B cell (primary cell): ENCODE measurements at regions of chr10 and their contacts with region 1.

Region 1: GRCh38 chr10:117216611-117217195 is 19.4 kb downstream of the KCNK18 start:
- DNase-seq: peak; percentile 77
- ATAC-seq: peak; percentile 88
- H3K4me3 ChIP-seq: peak overlapping the region; percentile 19 to 62 (median 46)
- H3K4me3 Mint-ChIP-seq: peak overlapping the region; percentile 80
- H3K27ac ChIP-seq: no peak overlapping the region
- H3K27ac Mint-ChIP-seq: no peak overlapping the region
- H3K4me1 ChIP-seq: peaks cover 14 to 15% of the 10 kb centered on the region in 2 donors
- H3K4me1 Mint-ChIP-seq: peaks cover 14% of the 10 kb centered on the region
- H3K27me3 ChIP-seq: peaks cover 0 to 25% (median 9%) of the 10 kb centered on the region in 4 experiments
- H3K27me3 Mint-ChIP-seq: peaks cover 34% of the 10 kb centered on the region
- CTCF ChIP-seq: peak; percentile 100

Region 2: GRCh38 chr10:117204316-117204715 is 12.4 kb before region 1 on chr10:
- CTCF ChIA-PET with region 1: interaction called, 16 read pairs
- POLR2A ChIA-PET with region 1: no interaction called
- intact Hi-C with region 1: no loop called
- DNase-seq: no peak
- ATAC-seq: no peak
- H3K4me3 ChIP-seq: no peak overlapping the region
- H3K4me3 Mint-ChIP-seq: no peak overlapping the region
- H3K27ac ChIP-seq: no peak overlapping the region
- H3K27ac Mint-ChIP-seq: no peak overlapping the region
- H3K4me1 ChIP-seq: no peaks in the 10 kb centered on the region
- H3K4me1 Mint-ChIP-seq: no peaks in the 10 kb centered on the region
- H3K27me3 ChIP-seq: no peaks in the 10 kb centered on the region
- H3K27me3 Mint-ChIP-seq: peaks cover 15% of the 10 kb centered on the region
- CTCF ChIP-seq: no peak

Region 3: GRCh38 chr10:117226824-117227451 is 10.2 kb after region 1 on chr10:
- CTCF ChIA-PET with region 1: interaction called, 22 read pairs
- POLR2A ChIA-PET with region 1: no interaction called
- intact Hi-C with region 1: no loop called
- DNase-seq: no peak
- ATAC-seq: no peak
- H3K4me3 ChIP-seq: no peak overlapping the region
- H3K4me3 Mint-ChIP-seq: no peak overlapping the region
- H3K27ac ChIP-seq: no peak overlapping the region
- H3K27ac Mint-ChIP-seq: no peak overlapping the region
- H3K4me1 ChIP-seq: no peaks in the 10 kb centered on the region
- H3K4me1 Mint-ChIP-seq: no peaks in the 10 kb centered on the region
- H3K27me3 ChIP-seq: peaks cover 0 to 8% (median 1%) of the 10 kb centered on the region in 4 experiments
- H3K27me3 Mint-ChIP-seq: peaks cover 41% of the 10 kb centered on the region
- CTCF ChIP-seq: no peak

Region 4: DNA sequence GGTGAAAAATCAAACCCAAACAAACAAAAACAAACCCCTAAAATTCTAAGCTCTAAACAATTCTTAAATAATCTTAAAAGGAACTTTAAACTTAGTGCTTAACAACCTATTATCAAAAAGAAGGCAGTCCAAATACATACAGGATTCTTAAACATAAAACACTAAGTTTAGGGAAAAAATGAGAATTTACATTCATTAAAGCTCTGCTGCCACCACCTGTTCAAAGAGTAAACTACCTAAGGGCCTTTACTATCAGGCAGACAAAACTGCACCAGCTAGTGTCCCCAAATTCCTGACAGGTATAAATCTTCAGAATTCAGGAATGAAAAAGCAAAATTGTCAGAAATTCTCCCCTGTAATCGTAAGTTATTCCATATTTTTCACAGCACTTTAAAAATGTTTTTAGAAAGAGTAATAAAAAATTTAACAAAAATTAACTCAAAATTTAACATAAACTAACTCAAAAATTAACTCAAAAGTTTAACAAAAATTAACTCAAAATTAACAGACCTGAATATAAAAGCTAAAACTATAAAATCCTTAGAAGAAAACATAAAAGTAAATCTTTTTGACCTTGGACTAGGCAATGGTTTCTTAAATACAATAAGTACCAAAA is 103.5 kb after region 1 on chr10:
- CTCF ChIA-PET with region 1: interaction called, 69 read pairs
- POLR2A ChIA-PET with region 1: no interaction called
- intact Hi-C with region 1: loop called (anchors 1 kb)
- DNase-seq: peak; percentile 21
- ATAC-seq: no peak
- H3K4me3 ChIP-seq: no peak overlapping the region
- H3K4me3 Mint-ChIP-seq: no peak overlapping the region
- H3K27ac ChIP-seq: no peak overlapping the region
- H3K27ac Mint-ChIP-seq: no peak overlapping the region
- H3K4me1 ChIP-seq: no peaks in the 10 kb centered on the region
- H3K4me1 Mint-ChIP-seq: no peaks in the 10 kb centered on the region
- H3K27me3 ChIP-seq: no peaks in the 10 kb centered on the region
- H3K27me3 Mint-ChIP-seq: no peaks in the 10 kb centered on the region
- CTCF ChIP-seq: peak; percentile 69

Region 5: DNA sequence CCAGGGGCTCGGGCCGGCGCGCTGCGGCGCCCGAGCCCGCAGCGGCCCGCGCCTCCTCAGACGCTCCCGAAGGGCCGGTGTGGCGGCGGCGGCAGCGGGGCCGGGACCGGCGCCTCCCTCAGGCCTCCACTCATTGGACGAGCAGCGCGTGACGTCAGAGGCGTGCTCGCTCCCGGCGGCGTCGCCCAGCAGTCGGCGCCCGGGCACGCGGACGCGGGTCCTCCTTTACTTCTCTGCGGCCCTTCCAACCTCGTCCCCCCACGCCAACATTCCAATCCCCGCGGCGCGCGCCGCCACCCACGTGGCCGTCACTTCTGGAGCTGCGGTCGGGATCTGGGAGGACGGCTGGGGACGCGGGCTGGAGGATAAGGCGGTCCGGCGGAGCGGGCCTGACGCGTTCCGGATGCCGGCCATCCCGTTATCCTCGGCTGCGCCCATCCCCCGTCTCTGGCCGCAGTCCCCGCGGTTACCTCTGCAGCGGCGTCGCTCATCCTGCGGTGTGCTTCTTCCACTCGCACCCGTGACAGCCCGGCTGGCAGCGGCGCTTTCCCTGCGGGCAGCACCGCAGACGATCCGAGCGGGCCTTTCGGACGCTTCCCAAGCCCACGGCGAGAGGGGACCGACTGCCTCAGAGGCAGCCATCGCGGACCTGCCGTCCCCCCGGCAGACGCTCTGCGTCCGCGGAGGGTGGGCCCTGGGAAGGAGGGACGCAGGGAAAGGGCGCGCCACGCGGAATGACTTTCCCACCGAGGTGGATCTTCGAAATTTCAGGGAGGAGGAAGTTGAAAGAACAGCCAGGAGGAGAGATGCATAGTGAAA is 158.9 kb after region 1 on chr10 and contains the start of gene PDZD8:
- CTCF ChIA-PET with region 1: no interaction called
- POLR2A ChIA-PET with region 1: no interaction called
- intact Hi-C with region 1: loop called (anchors 5 kb)
- DNase-seq: peak; percentile 93
- ATAC-seq: peak; percentile 89
- H3K4me3 ChIP-seq: peak within 1 kb of the TSS; percentile 76 to 99 (median 90)
- H3K4me3 Mint-ChIP-seq: peak within 1 kb of the TSS; percentile 97
- H3K27ac ChIP-seq: peak within 1 kb of the TSS; percentile 70 to 80
- H3K27ac Mint-ChIP-seq: peak within 1 kb of the TSS; percentile 91
- H3K4me1 ChIP-seq: peaks cover 17 to 24% of the 10 kb centered on the region in 2 donors
- H3K4me1 Mint-ChIP-seq: peaks cover 31% of the 10 kb centered on the region
- H3K27me3 ChIP-seq: peaks cover 0 to 23% (median 4%) of the 10 kb centered on the region in 4 experiments
- H3K27me3 Mint-ChIP-seq: peaks cover 25% of the 10 kb centered on the region
- CTCF ChIP-seq: no peak
- total RNA-seq, gene PDZD8: 11.3 and 13.2 TPM in 2 replicates

Region 6: GRCh38 chr10:118241229-118242137 is 1024.8 kb after region 1 on chr10:
- CTCF ChIA-PET with region 1: interaction called, 41 read pairs
- POLR2A ChIA-PET with region 1: no interaction called
- intact Hi-C with region 1: no loop called
- DNase-seq: peak; percentile 67
- ATAC-seq: no peak
- H3K4me3 ChIP-seq: no peak overlapping the region
- H3K4me3 Mint-ChIP-seq: no peak overlapping the region
- H3K27ac ChIP-seq: no peak overlapping the region
- H3K27ac Mint-ChIP-seq: no peak overlapping the region
- H3K4me1 ChIP-seq: no peaks in the 10 kb centered on the region
- H3K4me1 Mint-ChIP-seq: no peaks in the 10 kb centered on the region
- H3K27me3 ChIP-seq: peaks cover 0 to 25% (median 12%) of the 10 kb centered on the region in 4 experiments
- H3K27me3 Mint-ChIP-seq: peaks cover 48% of the 10 kb centered on the region
- CTCF ChIP-seq: peak; percentile 99